Left cardiac atrium (tissue), 4 donors: ENCODE measurements at regions of chr5 and their contacts with region 1.

Region 1: GRCh38 chr5:148730943-148731861 is 76.9 kb upstream of the HTR4 start:
- DNase-seq: peak; percentile 80
- ATAC-seq: peak; percentile 89 to 91

Region 2: GRCh38 chr5:148179234-148179824 is 551.9 kb before region 1 on chr5:
- intact Hi-C with region 1: loop called (anchors 5 kb)
- DNase-seq: no peak
- ATAC-seq: peak; percentile 47 to 65

Region 3: GRCh38 chr5:148374692-148375360 is 356.4 kb before region 1 on chr5:
- intact Hi-C with region 1: loop called in 1 of 2 experiments (anchors 5 kb)
- DNase-seq: peak; percentile 24
- ATAC-seq: peak; percentile 53 to 87

Region 4: DNA sequence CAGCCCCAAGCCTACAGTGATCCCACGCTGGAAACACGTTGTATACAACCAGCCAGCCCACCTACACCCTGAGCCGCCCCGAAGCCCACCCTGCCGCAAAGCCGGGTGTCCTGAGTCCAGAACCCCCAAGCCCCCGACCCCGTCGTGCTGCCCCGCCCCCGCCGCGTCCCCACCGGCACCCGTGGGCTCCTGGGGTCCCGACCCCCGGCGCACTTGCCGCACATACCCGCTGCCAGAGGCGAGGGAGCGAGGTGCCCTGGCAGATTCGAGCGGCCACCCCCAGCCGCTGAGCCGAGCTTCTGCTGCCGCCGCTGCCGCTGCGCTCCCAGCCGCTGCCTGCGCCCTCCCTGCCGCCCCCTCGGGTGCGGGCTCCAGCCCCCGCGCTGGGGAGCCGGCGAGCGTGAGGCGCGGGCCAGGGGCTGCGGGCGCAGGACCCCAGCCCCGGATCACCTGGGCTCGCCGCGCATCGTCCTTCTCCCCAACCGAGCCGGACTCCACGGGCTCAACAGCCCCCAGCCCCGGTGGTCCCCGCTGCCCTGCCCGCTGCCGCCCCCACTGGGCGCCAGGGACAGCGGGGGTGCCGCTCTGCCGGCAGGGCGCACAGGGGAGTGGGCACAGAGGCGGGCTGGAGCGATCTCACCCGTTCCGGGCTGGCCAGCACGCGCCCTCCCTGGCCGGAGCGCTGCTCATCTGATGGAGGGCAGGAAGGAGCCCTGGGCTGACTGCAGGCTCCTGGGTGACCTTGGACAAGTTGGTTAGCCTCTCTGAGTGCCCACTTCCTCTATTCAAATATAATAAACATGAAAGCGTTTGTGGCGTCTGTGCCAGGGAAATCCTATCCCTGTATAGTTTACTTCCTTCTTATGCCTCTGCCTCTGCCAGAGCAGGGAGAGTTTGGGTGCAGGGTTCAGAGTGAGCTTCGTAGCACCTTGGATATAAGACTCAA is 77.1 kb before region 1 on chr5 and contains the start of gene HTR4:
- intact Hi-C with region 1: loop called in 1 of 2 experiments (anchors 10 kb)
- DNase-seq: peak; percentile 36
- ATAC-seq: peak; percentile 71 to 81
- total RNA-seq, gene HTR4: 4.7 to 8.8 TPM

Region 5: GRCh38 chr5:149035372-149035790 is 304.2 kb after region 1 on chr5:
- intact Hi-C with region 1: loop called in 1 of 2 experiments (anchors 2 kb)
- DNase-seq: peak; percentile 79
- ATAC-seq: peak; percentile 93 to 94